Naive thymus-derived CD8-positive, alpha-beta T cell (primary cell): ENCODE measurements at regions of chr20 and their contacts with region 1.

Region 1: GRCh38 chr20:50153485-50154377 is at the start of gene PEDS1:
- DNase-seq: peak; percentile 68 to 87 (median 80)
- ATAC-seq: peak; percentile 96 to 97
- H3K4me3 Mint-ChIP-seq: peak within 1 kb of the TSS; percentile 80 to 94 (median 87)
- H3K27ac Mint-ChIP-seq: peak within 1 kb of the TSS; percentile 89 to 97 (median 96)
- H3K4me1 Mint-ChIP-seq: peaks cover 31 to 52% (median 48%) of the 10 kb centered on the region in 4 donors
- H3K27me3 Mint-ChIP-seq: no peaks in the 10 kb centered on the region
- polyA plus RNA-seq, gene PEDS1: 13.0 to 30.2 (median 14.4) TPM

Region 2: GRCh38 chr20:49804364-49804763 is 349.4 kb before region 1 on chr20:
- POLR2A ChIA-PET with region 1: no interaction called
- DNase-seq: no peak
- ATAC-seq: no peak
- H3K4me3 Mint-ChIP-seq: no peak overlapping the region
- H3K27ac Mint-ChIP-seq: peak overlapping the region in 1 of 10 donors; percentile 10
- H3K4me1 Mint-ChIP-seq: peaks cover 2 to 35% (median 12%) of the 10 kb centered on the region in 4 donors
- H3K27me3 Mint-ChIP-seq: no peaks in the 10 kb centered on the region

Region 3: DNA sequence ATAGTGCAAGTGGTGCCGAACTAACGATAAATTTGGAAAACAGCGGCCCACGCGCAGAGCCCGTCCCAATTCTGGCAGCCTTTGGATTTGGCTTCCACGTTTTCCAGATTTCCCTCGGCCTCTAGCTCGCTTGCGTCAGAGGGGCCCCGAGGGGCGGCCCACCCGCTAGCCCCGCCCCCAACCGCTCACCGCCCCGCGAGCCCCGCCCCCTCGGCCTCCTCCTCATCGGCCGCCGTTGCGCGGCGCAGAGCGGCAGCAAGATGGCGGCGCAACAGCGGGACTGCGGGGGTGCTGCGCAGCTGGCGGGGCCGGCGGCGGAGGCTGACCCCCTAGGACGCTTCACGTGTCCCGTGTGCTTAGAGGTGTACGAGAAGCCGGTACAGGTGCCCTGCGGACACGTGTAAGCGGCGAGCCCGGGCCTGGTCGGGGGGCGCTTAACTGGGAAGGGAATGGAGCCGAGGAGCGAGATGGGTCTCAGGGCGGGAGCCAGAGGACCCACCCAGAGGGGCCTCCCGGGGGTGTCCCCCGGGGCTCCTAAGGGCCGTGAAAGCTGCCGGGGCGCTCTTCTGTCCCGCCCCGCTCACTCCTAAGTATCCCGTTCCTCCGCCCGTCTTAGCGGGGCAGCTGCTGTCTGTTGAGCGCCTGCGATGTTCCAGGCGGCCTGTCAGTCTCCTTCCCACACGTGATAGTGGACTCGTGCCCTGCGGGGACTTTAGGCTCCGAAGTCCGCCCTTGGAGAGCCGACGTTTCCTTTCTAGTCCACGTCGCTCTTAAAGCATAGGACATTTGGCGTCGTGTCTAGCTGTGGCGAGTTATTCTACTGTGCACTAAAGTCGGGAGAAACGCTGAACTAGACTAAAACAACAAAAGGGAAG is 217.3 kb before region 1 on chr20 and contains the start of gene RNF114:
- POLR2A ChIA-PET with region 1: interaction called, 12 read pairs
- DNase-seq: peak; percentile 80 to 97 (median 87)
- ATAC-seq: peak; percentile 90 to 92
- H3K4me3 Mint-ChIP-seq: peak within 1 kb of the TSS; percentile 92 to 99 (median 98)
- H3K27ac Mint-ChIP-seq: peak within 1 kb of the TSS; percentile 93 to 98 (median 96)
- H3K4me1 Mint-ChIP-seq: peaks cover 32 to 63% (median 57%) of the 10 kb centered on the region in 4 donors
- H3K27me3 Mint-ChIP-seq: no peaks in the 10 kb centered on the region
- polyA plus RNA-seq, gene RNF114: 123 to 133 (median 123) TPM

Region 4: GRCh38 chr20:50115591-50116372 is 37.9 kb before region 1 on chr20:
- POLR2A ChIA-PET with region 1: interaction called, 35 read pairs
- DNase-seq: peak; percentile 82 to 94 (median 88)
- ATAC-seq: peak; percentile 76 to 79
- H3K4me3 Mint-ChIP-seq: peak overlapping the region; percentile 84 to 98 (median 92)
- H3K27ac Mint-ChIP-seq: peak overlapping the region; percentile 85 to 97 (median 94)
- H3K4me1 Mint-ChIP-seq: peaks cover 34 to 56% (median 54%) of the 10 kb centered on the region in 4 donors
- H3K27me3 Mint-ChIP-seq: no peaks in the 10 kb centered on the region

Region 5: DNA sequence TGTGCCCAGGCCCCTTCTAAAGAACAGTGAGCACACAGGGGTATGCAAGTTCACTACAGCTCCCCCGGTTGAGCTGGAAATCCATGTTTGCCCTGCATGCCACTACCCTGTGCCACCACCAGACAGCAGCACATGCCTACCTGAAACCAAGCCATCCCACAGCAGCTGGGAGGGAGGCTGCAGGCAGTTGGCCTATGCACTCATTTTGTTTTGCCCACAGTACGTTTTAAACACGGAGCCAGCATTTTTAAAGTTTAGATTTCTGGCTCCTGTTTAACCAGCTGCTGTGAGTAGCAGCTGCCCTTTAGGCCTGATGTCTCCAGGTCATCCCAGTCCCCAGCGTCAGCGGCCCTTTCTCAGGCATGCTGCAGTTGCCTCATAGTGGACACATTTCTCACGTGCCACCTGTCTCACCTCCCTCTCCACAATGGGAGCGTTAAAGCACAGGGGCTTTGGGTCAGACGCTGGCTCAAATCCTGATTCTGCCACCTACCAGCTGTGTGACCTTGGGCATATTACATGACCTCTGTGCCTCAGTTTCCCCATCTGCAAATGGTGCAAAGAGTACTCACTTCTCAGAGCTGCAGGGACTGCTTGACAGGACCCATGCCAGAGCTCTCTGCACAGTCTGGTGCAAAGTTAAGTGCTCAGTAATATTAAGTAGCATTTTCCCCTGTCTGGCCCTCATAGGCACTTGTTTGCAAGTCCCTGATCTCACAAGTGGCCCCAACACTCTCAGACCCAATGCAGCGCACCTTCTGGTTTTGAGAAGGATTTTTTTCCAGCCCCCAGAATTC is 32.6 kb before region 1 on chr20:
- POLR2A ChIA-PET with region 1: interaction called, 35 read pairs
- DNase-seq: peak; percentile 46 to 83 (median 62)
- ATAC-seq: peak; percentile 74 to 85
- H3K4me3 Mint-ChIP-seq: no peak overlapping the region
- H3K27ac Mint-ChIP-seq: peak overlapping the region in 3 of 10 donors; percentile 40 to 70 (median 44)
- H3K4me1 Mint-ChIP-seq: peaks cover 4 to 13% (median 9%) of the 10 kb centered on the region in 4 donors
- H3K27me3 Mint-ChIP-seq: no peaks in the 10 kb centered on the region

Region 6: GRCh38 chr20:50169329-50169831 is 15.6 kb after region 1 on chr20:
- POLR2A ChIA-PET with region 1: interaction called, 15 read pairs
- DNase-seq: peak; percentile 67 to 87 (median 78)
- ATAC-seq: peak; percentile 80 to 84
- H3K4me3 Mint-ChIP-seq: no peak overlapping the region
- H3K27ac Mint-ChIP-seq: no peak overlapping the region
- H3K4me1 Mint-ChIP-seq: peaks cover 12 to 21% (median 17%) of the 10 kb centered on the region in 4 donors
- H3K27me3 Mint-ChIP-seq: peaks cover 5 to 28% (median 16%) of the 10 kb centered on the region in 5 donors

Region 7: GRCh38 chr20:50189681-50190582 is 36.2 kb after region 1 on chr20:
- POLR2A ChIA-PET with region 1: interaction called, 19 read pairs
- DNase-seq: peak; percentile 75 to 92 (median 82)
- ATAC-seq: peak; percentile 48 to 55
- H3K4me3 Mint-ChIP-seq: peak overlapping the region; percentile 41 to 81 (median 67)
- H3K27ac Mint-ChIP-seq: peak overlapping the region in 6 of 10 donors; percentile 27 to 75 (median 56)
- H3K4me1 Mint-ChIP-seq: peaks cover 20 to 34% (median 29%) of the 10 kb centered on the region in 4 donors
- H3K27me3 Mint-ChIP-seq: peaks cover 2 to 13% (median 8%) of the 10 kb centered on the region in 5 donors